ENCODE measurements at regions of chr1 and their contacts with region 1.

Region 1: DNA sequence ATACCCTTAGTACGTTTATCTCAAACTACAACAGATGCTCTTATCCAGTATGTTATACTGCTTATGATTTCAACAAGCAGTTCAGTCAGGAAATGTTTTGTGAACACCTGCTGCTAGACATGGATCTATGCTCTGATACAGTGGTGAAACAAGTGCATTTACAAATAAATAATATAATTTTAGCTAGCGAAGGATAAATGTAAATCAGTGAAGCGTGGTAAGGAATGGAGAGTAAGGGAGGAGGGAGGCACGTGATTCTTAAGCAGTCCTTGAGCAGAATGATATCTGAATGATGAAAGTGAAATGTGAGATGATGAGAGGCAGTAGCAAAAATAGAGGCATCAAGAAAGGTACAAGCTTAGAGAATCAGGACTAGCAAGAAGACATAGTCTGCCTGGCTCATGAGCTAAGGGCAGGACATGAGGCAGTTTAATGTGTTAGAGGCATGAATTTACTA is 6.3 kb downstream of the TSNAX start:
- DNase-seq: no peak
- ATAC-seq: peak in 2 of 4 donors; percentile 33 to 39
- H3K4me3 ChIP-seq: no peak overlapping the region
- H3K27ac ChIP-seq: peak overlapping the region in 4 of 12 donors; percentile 3 to 43 (median 14)
- H3K4me1 ChIP-seq: peaks cover 7 to 57% (median 47%) of the 10 kb centered on the region in 12 donors
- H3K27me3 ChIP-seq: no peaks in the 10 kb centered on the region
- CTCF ChIP-seq: no peak
- POLR2A ChIP-seq: no peak

Region 2: DNA sequence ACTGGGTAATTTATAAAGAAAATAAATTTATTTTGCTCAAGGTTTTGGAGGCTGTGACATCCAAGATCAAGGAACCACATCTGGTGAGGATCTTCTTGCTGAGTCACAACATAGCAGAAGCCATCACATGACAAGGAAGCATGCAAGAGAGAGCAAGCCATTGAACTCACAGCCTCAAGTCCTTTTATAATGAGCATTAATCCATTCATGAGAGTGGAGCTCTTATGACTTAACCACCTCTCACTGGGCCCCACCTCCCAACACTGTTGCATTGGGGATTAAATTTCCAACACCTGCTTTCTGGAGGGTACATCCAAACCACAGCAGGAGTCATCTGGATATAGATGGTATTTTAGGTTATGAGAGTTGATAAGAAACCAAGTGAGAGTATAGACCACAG is 92.0 kb before region 1 on chr1:
- intact Hi-C with region 1: no loop called
- DNase-seq: no peak
- ATAC-seq: no peak
- H3K4me3 ChIP-seq: no peak overlapping the region
- H3K27ac ChIP-seq: no peak overlapping the region
- H3K4me1 ChIP-seq: no peaks in the 10 kb centered on the region
- H3K27me3 ChIP-seq: peaks cover 0 to 9% (median 0%) of the 10 kb centered on the region in 9 donors
- CTCF ChIP-seq: no peak
- POLR2A ChIP-seq: no peak

Region 3: GRCh38 chr1:231584921-231585320 is 50.2 kb after region 1 on chr1:
- intact Hi-C with region 1: loop called in 3 of 10 experiments (anchors 5 kb)
- DNase-seq: no peak
- ATAC-seq: no peak
- H3K4me3 ChIP-seq: no peak overlapping the region
- H3K27ac ChIP-seq: no peak overlapping the region
- H3K4me1 ChIP-seq: peaks cover 0 to 14% (median 0%) of the 10 kb centered on the region in 12 donors
- H3K27me3 ChIP-seq: no peaks in the 10 kb centered on the region
- CTCF ChIP-seq: no peak
- POLR2A ChIP-seq: no peak

Region 4: DNA sequence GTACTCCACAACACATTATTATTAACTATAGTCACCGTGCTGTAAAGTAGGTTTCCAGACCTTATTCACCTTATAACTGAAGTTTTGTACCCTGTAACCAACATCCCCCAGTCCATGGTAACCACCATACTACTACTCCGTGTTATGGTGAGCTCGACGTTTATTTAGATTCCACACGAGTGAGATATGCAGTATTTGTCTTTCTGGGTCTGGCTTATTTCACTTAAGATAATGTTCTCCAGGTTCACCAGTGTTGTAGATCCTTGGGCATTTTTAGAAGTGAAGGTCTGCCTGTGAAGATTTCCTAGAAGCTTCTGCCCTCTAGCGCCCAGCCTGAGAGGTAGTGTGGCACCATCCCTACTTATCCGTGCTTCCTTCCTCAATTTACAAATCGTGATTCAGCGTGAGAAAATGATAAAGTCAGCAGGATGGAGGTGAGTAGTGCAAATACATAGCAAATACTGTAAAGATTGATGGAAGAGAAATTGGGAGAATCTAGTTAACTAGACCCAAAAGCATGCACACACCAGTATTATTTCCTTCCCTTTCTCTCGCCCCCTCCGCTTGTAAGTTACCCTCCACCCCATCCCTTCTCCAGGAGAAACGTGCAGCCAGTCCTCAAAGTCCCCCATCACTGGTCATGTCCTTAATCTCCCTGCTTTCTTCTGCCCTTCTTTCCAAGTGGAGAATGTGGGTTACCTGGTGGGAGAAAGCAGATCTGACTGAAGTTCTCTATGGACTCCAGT is 55.9 kb after region 1 on chr1:
- intact Hi-C with region 1: loop called in 3 of 10 experiments (anchors 5 kb)
- DNase-seq: peak in 4 of 5 donors; percentile 47 to 70 (median 53)
- ATAC-seq: peak; percentile 64 to 95 (median 92)
- H3K4me3 ChIP-seq: no peak overlapping the region
- H3K27ac ChIP-seq: peak overlapping the region in 1 of 12 donors; percentile 10
- H3K4me1 ChIP-seq: peaks cover 0 to 16% (median 6%) of the 10 kb centered on the region in 12 donors
- H3K27me3 ChIP-seq: no peaks in the 10 kb centered on the region
- CTCF ChIP-seq: peak; percentile 65 to 85 (median 76)
- POLR2A ChIP-seq: no peak